ENCODE measurements at regions of chr17 and their contacts with region 1.

Region 1: GRCh38 chr17:27293898-27294688 is at the start of gene WSB1:
- DNase-seq: peak; percentile 93
- ATAC-seq: peak; percentile 88
- H3K4me3 Mint-ChIP-seq: peak within 1 kb of the TSS; percentile 93
- H3K27ac Mint-ChIP-seq: peak within 1 kb of the TSS; percentile 99
- H3K4me1 Mint-ChIP-seq: peaks cover 35% of the 10 kb centered on the region
- H3K27me3 Mint-ChIP-seq: no peaks in the 10 kb centered on the region
- total RNA-seq, gene WSB1: 109 to 177 TPM

Region 2: GRCh38 chr17:27494192-27495091 is 200.3 kb after region 1 on chr17:
- CTCF ChIA-PET with region 1: no interaction called
- DNase-seq: no peak
- ATAC-seq: no peak
- H3K4me3 Mint-ChIP-seq: no peak overlapping the region
- H3K27ac Mint-ChIP-seq: no peak overlapping the region
- H3K4me1 Mint-ChIP-seq: peaks cover 35% of the 10 kb centered on the region
- H3K27me3 Mint-ChIP-seq: no peaks in the 10 kb centered on the region

Region 3: DNA sequence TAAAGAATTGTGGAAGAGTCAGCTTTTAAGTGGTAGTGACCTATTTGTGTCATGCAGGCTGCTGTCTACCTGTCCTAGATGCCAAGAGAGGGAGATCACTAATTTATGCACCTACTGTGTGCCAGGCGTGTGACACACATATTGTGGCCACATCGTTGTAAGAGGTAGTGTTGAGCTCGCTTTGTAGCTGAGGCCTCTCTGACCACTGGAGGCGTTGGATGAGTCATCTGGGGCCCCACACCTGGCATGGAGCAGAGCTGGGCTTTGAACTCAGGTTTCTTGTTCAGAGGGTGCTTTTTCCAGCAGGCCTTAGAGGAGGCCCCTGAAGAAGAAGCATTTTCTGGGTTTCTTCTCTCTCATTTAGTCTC is 284.6 kb after region 1 on chr17:
- CTCF ChIA-PET with region 1: interaction called, 10 read pairs
- DNase-seq: peak; percentile 86
- ATAC-seq: peak; percentile 78
- H3K4me3 Mint-ChIP-seq: peak overlapping the region; percentile 29
- H3K27ac Mint-ChIP-seq: peak overlapping the region; percentile 88
- H3K4me1 Mint-ChIP-seq: peaks cover 81% of the 10 kb centered on the region
- H3K27me3 Mint-ChIP-seq: no peaks in the 10 kb centered on the region

Measured in activated CD8-positive, alpha-beta memory T cell treated with anti-CD3 and anti-CD28 coated beads, Interleukin-2, amount 10 ng/mL, durations not matched to agents 7 days and 5 days (primary cell).